CD8-positive, alpha-beta T cell (primary cell): ENCODE measurements at regions of chr10 and their contacts with region 1.

Region 1: GRCh38 chr10:13348216-13349017 is at the start of gene SEPHS1:
- DNase-seq: peak; percentile 51 to 89 (median 79)
- ATAC-seq: peak; percentile 67
- H3K4me3 ChIP-seq: peak within 1 kb of the TSS; percentile 83 to 93
- H3K4me3 Mint-ChIP-seq: peak within 1 kb of the TSS; percentile 96
- H3K27ac ChIP-seq: peak within 1 kb of the TSS; percentile 65 to 82
- H3K27ac Mint-ChIP-seq: peak within 1 kb of the TSS; percentile 94
- H3K4me1 ChIP-seq: peaks cover 48% of the 10 kb centered on the region
- H3K4me1 Mint-ChIP-seq: peaks cover 61% of the 10 kb centered on the region
- H3K27me3 ChIP-seq: no peaks in the 10 kb centered on the region
- H3K27me3 Mint-ChIP-seq: no peaks in the 10 kb centered on the region
- CTCF ChIP-seq: no peak
- total RNA-seq, gene SEPHS1: 16.9 to 19.2 TPM

Region 2: DNA sequence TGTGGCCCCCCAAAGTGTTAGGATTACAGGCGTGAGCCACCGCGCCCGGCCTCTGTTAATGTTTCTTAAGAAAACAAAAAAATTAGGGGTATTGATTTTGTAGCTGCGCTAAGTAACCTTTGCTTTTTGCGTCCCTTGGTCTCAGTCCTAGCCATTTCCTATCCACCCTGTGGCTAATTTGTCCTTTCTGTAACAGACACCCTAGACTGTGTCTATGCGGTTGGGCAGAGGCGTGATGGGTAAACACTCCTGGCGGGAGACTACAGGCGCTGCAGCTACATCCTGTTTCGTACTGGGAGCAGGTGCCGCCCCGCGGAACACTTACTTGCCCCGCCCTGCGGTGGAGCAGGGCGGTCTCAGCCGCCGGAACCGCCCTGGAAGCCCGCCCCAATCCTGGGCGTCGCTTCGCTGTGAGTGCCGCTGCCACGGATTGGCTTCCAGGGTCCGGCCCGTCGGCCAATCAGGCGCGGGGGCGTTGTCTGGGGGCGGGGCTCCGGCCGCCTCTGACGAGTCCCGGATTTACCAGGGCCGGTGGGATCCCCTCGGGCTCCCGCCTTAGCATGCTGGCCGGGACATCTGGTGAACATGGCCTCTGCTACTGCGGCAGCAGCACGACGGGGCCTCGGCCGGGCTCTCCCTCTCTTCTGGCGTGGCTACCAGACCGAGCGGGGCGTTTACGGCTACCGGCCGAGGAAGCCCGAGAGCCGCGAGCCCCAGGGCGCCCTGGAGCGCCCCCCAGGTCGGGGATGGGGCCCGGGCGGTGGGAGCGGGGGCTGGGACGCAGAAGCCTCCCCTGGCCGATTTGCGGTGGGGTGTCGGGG is 1279.8 kb before region 1 on chr10 and contains the start of gene DHTKD1:
- CTCF ChIA-PET with region 1: no interaction called
- POLR2A ChIA-PET with region 1: no interaction called
- intact Hi-C with region 1: loop called (anchors 2 to 5 kb)
- DNase-seq: peak; percentile 97 to 99 (median 98)
- ATAC-seq: peak; percentile 98
- H3K4me3 ChIP-seq: peak within 1 kb of the TSS; percentile 82 to 89
- H3K4me3 Mint-ChIP-seq: peak within 1 kb of the TSS; percentile 88
- H3K27ac ChIP-seq: peak within 1 kb of the TSS; percentile 66 to 75
- H3K27ac Mint-ChIP-seq: peak within 1 kb of the TSS; percentile 96
- H3K4me1 ChIP-seq: peaks cover 7% of the 10 kb centered on the region
- H3K4me1 Mint-ChIP-seq: peaks cover 19% of the 10 kb centered on the region
- H3K27me3 ChIP-seq: no peaks in the 10 kb centered on the region
- H3K27me3 Mint-ChIP-seq: no peaks in the 10 kb centered on the region
- CTCF ChIP-seq: peak; percentile 31
- total RNA-seq, gene DHTKD1: 6.6 TPM

Region 3: DNA sequence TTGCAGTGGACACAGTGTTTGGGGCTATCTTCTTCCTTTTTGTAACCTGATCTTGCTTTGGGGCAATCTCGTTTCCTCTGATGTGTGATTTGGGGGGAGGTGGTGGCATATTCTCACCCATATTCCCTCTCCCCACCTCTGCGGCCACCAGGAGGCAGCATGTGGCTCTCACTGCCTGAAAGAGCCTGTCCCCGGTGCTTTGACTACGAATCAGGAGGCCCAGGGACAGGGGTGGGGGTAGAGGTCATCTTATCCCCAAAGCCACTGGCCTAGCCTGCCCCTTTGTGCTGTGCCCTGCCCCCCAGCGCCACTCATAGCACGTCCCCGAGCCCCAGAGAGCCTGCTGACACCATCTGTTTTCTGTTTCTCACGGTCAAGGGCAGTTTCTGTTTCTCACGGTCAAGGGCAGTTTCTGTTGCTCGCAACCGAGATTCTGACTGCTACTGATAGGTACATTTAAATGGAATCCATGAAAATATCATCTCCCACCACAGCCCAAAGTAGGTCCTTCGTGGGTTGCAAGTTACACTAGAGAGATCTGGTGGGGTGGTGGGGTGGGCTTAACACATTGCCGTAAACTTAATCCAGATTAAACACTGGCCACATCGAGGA is 76.8 kb before region 1 on chr10:
- CTCF ChIA-PET with region 1: interaction called, 10 read pairs
- POLR2A ChIA-PET with region 1: no interaction called
- intact Hi-C with region 1: loop called in 1 of 2 experiments (anchors 2 kb)
- DNase-seq: peak; percentile 19 to 72 (median 59)
- ATAC-seq: peak; percentile 81
- H3K4me3 ChIP-seq: no peak overlapping the region
- H3K4me3 Mint-ChIP-seq: peak overlapping the region; percentile 31
- H3K27ac ChIP-seq: no peak overlapping the region
- H3K27ac Mint-ChIP-seq: peak overlapping the region; percentile 76
- H3K4me1 ChIP-seq: no peaks in the 10 kb centered on the region
- H3K4me1 Mint-ChIP-seq: peaks cover 10% of the 10 kb centered on the region
- H3K27me3 ChIP-seq: no peaks in the 10 kb centered on the region
- H3K27me3 Mint-ChIP-seq: no peaks in the 10 kb centered on the region
- CTCF ChIP-seq: no peak

Region 4: GRCh38 chr10:13371897-13372470 is 23.6 kb after region 1 on chr10:
- CTCF ChIA-PET with region 1: interaction called, 13 read pairs
- POLR2A ChIA-PET with region 1: interaction called, 4 read pairs
- intact Hi-C with region 1: loop called in 1 of 2 experiments (anchors 2 kb)
- DNase-seq: peak; percentile 6 to 85 (median 65)
- ATAC-seq: peak; percentile 100
- H3K4me3 ChIP-seq: no peak overlapping the region
- H3K4me3 Mint-ChIP-seq: no peak overlapping the region
- H3K27ac ChIP-seq: no peak overlapping the region
- H3K27ac Mint-ChIP-seq: no peak overlapping the region
- H3K4me1 ChIP-seq: no peaks in the 10 kb centered on the region
- H3K4me1 Mint-ChIP-seq: peaks cover 4% of the 10 kb centered on the region
- H3K27me3 ChIP-seq: no peaks in the 10 kb centered on the region
- H3K27me3 Mint-ChIP-seq: peaks cover 7% of the 10 kb centered on the region
- CTCF ChIP-seq: peak; percentile 93